CD4-positive, alpha-beta T cell (primary cell): ENCODE measurements at regions of chr18 and their contacts with region 1.

Region 1: GRCh38 chr18:70491734-70492348 is 203.0 kb downstream of the SOCS6 start:
- DNase-seq: peak in 12 of 14 experiments; percentile 9 to 65 (median 38)
- ATAC-seq: peak; percentile 61
- H3K4me3 ChIP-seq: no peak overlapping the region
- H3K4me3 Mint-ChIP-seq: no peak overlapping the region
- H3K27ac ChIP-seq: no peak overlapping the region
- H3K27ac Mint-ChIP-seq: no peak overlapping the region
- H3K4me1 ChIP-seq: no peaks in the 10 kb centered on the region
- H3K4me1 Mint-ChIP-seq: peaks cover 17% of the 10 kb centered on the region
- H3K27me3 ChIP-seq: no peaks in the 10 kb centered on the region
- H3K27me3 Mint-ChIP-seq: no peaks in the 10 kb centered on the region
- CTCF ChIP-seq: peak; percentile 84

Region 2: DNA sequence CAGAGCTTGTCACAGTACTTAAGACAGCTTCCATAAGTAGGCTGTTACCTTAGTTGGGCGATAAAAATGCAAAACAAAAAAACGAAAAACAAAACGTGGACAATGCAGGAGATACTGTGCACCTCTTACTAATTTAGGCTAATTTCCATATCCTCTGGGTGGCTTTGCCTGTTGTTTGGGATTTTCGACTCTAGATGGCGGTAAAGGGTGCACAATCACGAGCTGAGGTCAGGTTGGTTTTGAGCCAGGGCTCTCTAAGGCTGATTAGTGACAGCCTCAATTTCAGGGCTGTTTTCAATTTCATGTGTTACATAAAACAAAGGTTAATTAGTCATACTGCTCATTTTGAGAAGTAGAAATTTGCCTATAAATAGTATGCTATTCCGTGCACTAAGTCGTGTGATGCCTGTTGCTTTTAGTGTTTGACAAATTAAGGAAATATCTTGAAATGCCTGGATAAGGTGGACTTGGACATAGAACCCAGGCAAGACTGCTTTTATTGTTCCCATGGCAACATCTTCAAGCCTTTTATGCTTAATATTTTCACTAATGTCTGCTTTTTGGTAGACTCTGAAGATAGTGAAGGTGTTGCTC is 290.1 kb after region 1 on chr18:
- CTCF ChIA-PET with region 1: interaction called, 3 read pairs
- POLR2A ChIA-PET with region 1: no interaction called
- intact Hi-C with region 1: loop called in 1 of 2 experiments (anchors 10 kb)
- DNase-seq: peak; percentile 39 to 80 (median 61)
- ATAC-seq: peak; percentile 99
- H3K4me3 ChIP-seq: no peak overlapping the region
- H3K4me3 Mint-ChIP-seq: no peak overlapping the region
- H3K27ac ChIP-seq: no peak overlapping the region
- H3K27ac Mint-ChIP-seq: peak overlapping the region; percentile 65
- H3K4me1 ChIP-seq: no peaks in the 10 kb centered on the region
- H3K4me1 Mint-ChIP-seq: peaks cover 23% of the 10 kb centered on the region
- H3K27me3 ChIP-seq: no peaks in the 10 kb centered on the region
- H3K27me3 Mint-ChIP-seq: no peaks in the 10 kb centered on the region
- CTCF ChIP-seq: peak; percentile 66

Region 3: GRCh38 chr18:70892381-70892780 is 400.5 kb after region 1 on chr18:
- CTCF ChIA-PET with region 1: no interaction called
- POLR2A ChIA-PET with region 1: no interaction called
- intact Hi-C with region 1: loop called in 1 of 2 experiments (anchors 10 kb)
- DNase-seq: no peak
- ATAC-seq: no peak
- H3K4me3 ChIP-seq: no peak overlapping the region
- H3K4me3 Mint-ChIP-seq: no peak overlapping the region
- H3K27ac ChIP-seq: no peak overlapping the region
- H3K27ac Mint-ChIP-seq: no peak overlapping the region
- H3K4me1 ChIP-seq: no peaks in the 10 kb centered on the region
- H3K4me1 Mint-ChIP-seq: no peaks in the 10 kb centered on the region
- H3K27me3 ChIP-seq: no peaks in the 10 kb centered on the region
- H3K27me3 Mint-ChIP-seq: no peaks in the 10 kb centered on the region
- CTCF ChIP-seq: no peak

Region 4: DNA sequence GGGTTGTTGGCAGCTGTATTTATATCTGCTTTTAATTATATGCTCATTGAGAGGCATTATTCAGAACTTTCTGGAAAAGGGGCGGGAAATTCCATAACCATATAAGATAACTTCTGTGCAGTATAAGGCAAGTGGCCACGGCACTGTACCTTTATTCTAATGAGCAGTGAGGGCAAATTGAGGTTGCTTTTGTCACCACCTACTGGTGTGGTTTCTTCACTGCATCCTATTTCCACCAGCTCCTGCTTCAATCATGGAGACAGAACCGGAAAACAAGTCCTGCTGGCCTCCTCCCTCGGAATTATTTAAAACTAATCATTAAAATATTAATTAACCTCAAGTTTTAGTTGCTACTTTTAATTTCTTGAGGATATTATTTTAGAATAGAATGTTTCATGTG is 1292.9 kb after region 1 on chr18:
- CTCF ChIA-PET with region 1: no interaction called
- POLR2A ChIA-PET with region 1: no interaction called
- intact Hi-C with region 1: loop called (anchors 2 kb)
- DNase-seq: peak in 2 of 14 experiments; percentile 1 to 9
- ATAC-seq: no peak
- H3K4me3 ChIP-seq: no peak overlapping the region
- H3K4me3 Mint-ChIP-seq: no peak overlapping the region
- H3K27ac ChIP-seq: no peak overlapping the region
- H3K27ac Mint-ChIP-seq: no peak overlapping the region
- H3K4me1 ChIP-seq: no peaks in the 10 kb centered on the region
- H3K4me1 Mint-ChIP-seq: no peaks in the 10 kb centered on the region
- H3K27me3 ChIP-seq: no peaks in the 10 kb centered on the region
- H3K27me3 Mint-ChIP-seq: no peaks in the 10 kb centered on the region
- CTCF ChIP-seq: peak; percentile 10

Region 5: DNA sequence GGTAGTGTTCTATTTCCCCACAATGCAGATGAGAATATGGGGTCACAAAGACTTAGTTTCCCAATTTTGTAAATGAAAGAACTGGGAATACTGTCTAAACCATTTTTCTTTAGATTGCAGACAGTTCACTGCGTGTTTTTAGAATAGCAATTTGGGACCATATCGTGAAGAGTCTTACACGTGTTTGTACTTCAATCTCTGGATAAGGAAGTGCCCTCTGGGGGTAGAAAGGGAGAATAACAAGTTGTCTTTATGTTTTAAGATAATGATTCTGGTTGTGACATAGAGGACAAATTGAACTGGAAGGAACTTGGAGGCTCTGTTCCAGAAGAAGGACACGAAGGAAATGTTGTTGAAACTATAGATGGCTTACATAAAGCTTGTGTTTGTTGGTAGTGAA is 1594.6 kb after region 1 on chr18:
- CTCF ChIA-PET with region 1: no interaction called
- POLR2A ChIA-PET with region 1: no interaction called
- intact Hi-C with region 1: loop called (anchors 1 to 5 kb)
- DNase-seq: peak in 2 of 14 experiments; percentile 4 to 6
- ATAC-seq: peak; percentile 43
- H3K4me3 ChIP-seq: no peak overlapping the region
- H3K4me3 Mint-ChIP-seq: no peak overlapping the region
- H3K27ac ChIP-seq: no peak overlapping the region
- H3K27ac Mint-ChIP-seq: no peak overlapping the region
- H3K4me1 ChIP-seq: no peaks in the 10 kb centered on the region
- H3K4me1 Mint-ChIP-seq: no peaks in the 10 kb centered on the region
- H3K27me3 ChIP-seq: no peaks in the 10 kb centered on the region
- H3K27me3 Mint-ChIP-seq: no peaks in the 10 kb centered on the region
- CTCF ChIP-seq: peak; percentile 30